ENCODE measurements at regions of chr9 and their contacts with region 1.

Region 1: DNA sequence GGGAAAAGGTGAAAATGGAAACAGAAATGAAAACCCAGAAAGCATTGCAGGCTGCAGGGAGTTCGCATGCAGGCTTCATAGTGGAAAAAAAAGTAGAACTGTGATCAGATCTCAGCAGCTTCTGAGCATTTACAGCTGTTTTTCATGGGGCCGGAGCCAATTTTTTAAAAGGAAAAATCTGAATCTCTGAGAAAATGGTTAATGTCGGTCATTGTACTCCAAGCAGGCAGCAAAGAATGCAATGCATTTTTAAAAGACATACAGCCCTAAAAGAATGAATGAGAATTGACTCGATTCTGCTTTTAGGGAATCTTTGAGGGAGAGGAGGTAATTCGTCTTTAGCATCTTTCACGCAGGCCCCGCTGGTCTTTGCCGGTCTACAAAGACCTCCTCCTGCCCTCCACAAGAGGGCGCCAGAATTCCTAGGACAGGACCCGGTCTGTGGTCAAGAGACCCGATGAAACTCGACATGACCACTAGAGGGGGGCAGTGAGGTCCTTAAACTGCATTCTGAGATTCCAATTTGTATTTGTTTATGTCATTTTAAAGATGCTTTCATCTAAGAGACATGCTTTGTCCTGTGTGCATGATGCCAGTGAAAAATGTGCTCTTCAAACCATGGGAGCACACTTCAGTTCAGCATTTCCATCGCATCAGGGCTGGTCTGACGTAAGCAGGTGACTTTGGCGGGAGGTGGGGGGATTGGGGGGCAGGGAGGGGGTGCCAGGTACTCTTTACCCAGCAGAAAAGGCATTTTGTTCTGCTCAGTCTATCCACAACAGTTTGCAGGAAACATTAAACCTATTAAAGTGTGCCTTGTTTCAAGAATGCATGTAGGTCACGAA is 43.7 kb upstream of the TMEM252 start:
- DNase-seq: peak; percentile 65 to 85
- ATAC-seq: peak; percentile 96 to 99 (median 98)
- H3K4me3 ChIP-seq: no peak overlapping the region
- H3K27ac ChIP-seq: no peak overlapping the region
- H3K4me1 ChIP-seq: no peaks in the 10 kb centered on the region
- H3K27me3 ChIP-seq: no peaks in the 10 kb centered on the region
- CTCF ChIP-seq: peak; percentile 99

Region 2: GRCh38 chr9:68844631-68845612 is 260.5 kb after region 1 on chr9:
- intact Hi-C with region 1: loop called (anchors 2 to 5 kb)
- DNase-seq: peak in 1 of 2 donors; percentile 22
- ATAC-seq: peak in 3 of 4 donors; percentile 63 to 81 (median 68)
- H3K4me3 ChIP-seq: no peak overlapping the region
- H3K27ac ChIP-seq: no peak overlapping the region
- H3K4me1 ChIP-seq: peaks cover 7% of the 10 kb centered on the region
- H3K27me3 ChIP-seq: no peaks in the 10 kb centered on the region
- CTCF ChIP-seq: peak; percentile 53

Region 3: GRCh38 chr9:68951879-68952659 is 367.7 kb after region 1 on chr9:
- intact Hi-C with region 1: loop called in 1 of 2 experiments (anchors 5 kb)
- DNase-seq: no peak
- ATAC-seq: no peak
- H3K4me3 ChIP-seq: no peak overlapping the region
- H3K27ac ChIP-seq: no peak overlapping the region
- H3K4me1 ChIP-seq: no peaks in the 10 kb centered on the region
- H3K27me3 ChIP-seq: no peaks in the 10 kb centered on the region
- CTCF ChIP-seq: no peak

Region 4: DNA sequence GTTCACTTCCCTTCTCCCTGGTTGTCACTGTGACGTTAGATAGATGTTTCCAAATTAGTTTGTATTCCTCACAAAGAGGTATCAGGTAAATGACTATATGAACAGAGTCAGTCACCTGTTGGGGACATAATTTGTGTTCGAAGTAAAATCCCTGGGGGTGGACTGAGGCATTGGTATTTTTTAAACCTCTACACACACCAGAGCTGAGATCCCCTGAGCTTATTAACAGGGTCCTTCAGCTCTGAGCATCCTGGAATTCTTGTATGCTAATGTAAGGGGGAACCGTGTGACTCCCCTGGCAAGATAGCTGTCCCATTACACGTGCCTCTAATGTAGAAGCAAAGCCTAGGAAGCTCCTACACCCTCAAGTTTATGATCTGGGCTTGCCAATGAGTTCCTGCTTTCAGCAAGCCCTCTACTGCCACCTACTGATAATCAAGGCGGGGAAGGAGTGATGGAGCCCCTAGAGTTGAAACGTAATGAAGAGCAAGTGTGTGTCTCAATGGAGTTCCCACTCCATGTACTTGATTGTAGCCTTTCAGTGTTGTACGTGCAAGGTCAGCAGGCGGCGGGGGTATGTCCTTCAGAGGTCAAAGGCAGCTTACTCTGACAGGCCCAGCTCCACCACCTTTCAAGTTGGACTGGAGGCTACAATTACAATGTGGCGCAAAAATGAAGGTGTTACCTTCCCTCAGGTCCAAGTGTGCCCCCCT is 415.1 kb after region 1 on chr9:
- intact Hi-C with region 1: loop called (anchors 1 to 5 kb)
- DNase-seq: no peak
- ATAC-seq: peak; percentile 80 to 96 (median 84)
- H3K4me3 ChIP-seq: no peak overlapping the region
- H3K27ac ChIP-seq: no peak overlapping the region
- H3K4me1 ChIP-seq: no peaks in the 10 kb centered on the region
- H3K27me3 ChIP-seq: no peaks in the 10 kb centered on the region
- CTCF ChIP-seq: peak; percentile 76